PC-3 (cell line): ENCODE measurements at regions of chr4 and their contacts with region 1.

Region 1: GRCh38 chr4:20773144-20773997 is 73.1 kb downstream of the PACRGL start:
- DNase-seq: peak; percentile 72
- ATAC-seq: peak; percentile 79
- H3K4me3 ChIP-seq: no peak overlapping the region
- H3K27ac ChIP-seq: no peak overlapping the region
- H3K4me1 ChIP-seq: no peaks in the 10 kb centered on the region
- H3K27me3 ChIP-seq: peaks cover 11% of the 10 kb centered on the region
- CTCF ChIP-seq: peak; percentile 73

Region 2: DNA sequence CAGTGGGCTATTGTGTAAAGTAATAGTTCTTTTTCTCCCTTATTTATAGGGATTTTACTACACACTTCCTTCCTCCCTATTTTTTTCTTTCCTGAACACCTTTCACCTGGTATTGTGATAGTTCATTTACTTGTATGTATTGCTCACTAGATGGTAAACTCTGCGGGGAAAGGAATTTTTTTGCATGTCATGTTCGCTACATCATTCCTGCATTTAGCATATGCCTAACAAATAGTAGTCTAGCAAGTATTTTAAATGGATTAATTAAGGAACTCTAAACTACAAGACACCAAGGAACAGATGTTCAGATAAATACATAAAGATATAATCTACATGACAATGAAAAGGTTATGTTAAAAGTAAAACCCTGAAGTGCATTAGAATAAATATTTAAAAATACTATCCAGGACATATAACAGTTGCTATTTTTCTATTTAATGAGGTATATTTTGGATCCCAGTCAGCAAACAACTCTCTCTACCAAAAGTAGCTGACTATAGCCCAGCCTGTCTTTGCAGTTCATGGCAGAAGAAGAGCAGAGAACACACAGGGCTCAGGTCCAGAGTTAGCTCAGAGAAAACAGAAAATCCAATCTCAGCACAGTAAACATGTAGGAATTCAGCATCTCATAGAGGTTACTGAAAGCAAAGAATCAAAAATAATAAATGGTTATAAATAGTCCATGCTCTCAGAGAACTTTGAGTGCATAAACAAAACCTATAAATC is 14.7 kb after region 1 on chr4:
- CTCF ChIA-PET with region 1: interaction called, 3 read pairs
- POLR2A ChIA-PET with region 1: interaction called, 11 read pairs
- intact Hi-C with region 1: no loop called
- DNase-seq: no peak
- ATAC-seq: no peak
- H3K4me3 ChIP-seq: no peak overlapping the region
- H3K27ac ChIP-seq: no peak overlapping the region
- H3K4me1 ChIP-seq: no peaks in the 10 kb centered on the region
- H3K27me3 ChIP-seq: no peaks in the 10 kb centered on the region
- CTCF ChIP-seq: no peak

Region 3: DNA sequence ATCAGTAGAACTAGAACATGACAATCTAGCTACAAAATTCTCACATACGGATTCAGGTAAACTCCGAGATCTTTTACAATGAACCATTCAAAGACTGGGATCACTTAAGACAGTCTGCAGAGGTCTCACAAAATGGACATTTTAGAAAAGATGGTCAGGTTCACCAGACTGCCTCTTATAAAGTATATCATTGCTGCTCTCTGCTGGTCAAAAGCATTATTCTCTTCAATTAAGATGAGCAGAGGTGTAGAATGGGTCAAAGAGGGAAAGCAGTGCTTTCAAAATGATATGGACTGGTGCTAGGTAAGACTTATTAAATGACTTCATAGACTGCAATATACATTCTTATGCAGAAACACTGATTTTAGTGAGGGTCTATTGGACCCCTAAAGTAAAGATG is 361.6 kb after region 1 on chr4:
- CTCF ChIA-PET with region 1: no interaction called
- POLR2A ChIA-PET with region 1: no interaction called
- intact Hi-C with region 1: loop called (anchors 1 kb)
- DNase-seq: peak; percentile 44
- ATAC-seq: no peak
- H3K4me3 ChIP-seq: no peak overlapping the region
- H3K27ac ChIP-seq: no peak overlapping the region
- H3K4me1 ChIP-seq: no peaks in the 10 kb centered on the region
- H3K27me3 ChIP-seq: peaks cover 52% of the 10 kb centered on the region
- CTCF ChIP-seq: peak; percentile 49